Breast epithelium (tissue), 4 donors: ENCODE measurements at regions of chr12 and their contacts with region 1.

Region 1: GRCh38 chr12:72173974-72174373 is 98.2 kb upstream of the TRHDE start:
- DNase-seq: no peak
- H3K4me3 ChIP-seq: no peak overlapping the region
- H3K27ac ChIP-seq: no peak overlapping the region
- H3K4me1 ChIP-seq: no peaks in the 10 kb centered on the region
- H3K27me3 ChIP-seq: no peaks in the 10 kb centered on the region
- CTCF ChIP-seq: no peak
- POLR2A ChIP-seq: no peak

Region 2: GRCh38 chr12:72141381-72141780 is 32.6 kb before region 1 on chr12:
- intact Hi-C with region 1: no loop called
- DNase-seq: no peak
- H3K4me3 ChIP-seq: no peak overlapping the region
- H3K27ac ChIP-seq: no peak overlapping the region
- H3K4me1 ChIP-seq: no peaks in the 10 kb centered on the region
- H3K27me3 ChIP-seq: no peaks in the 10 kb centered on the region
- CTCF ChIP-seq: no peak
- POLR2A ChIP-seq: no peak

Region 3: GRCh38 chr12:74085571-74085970 is 1911.6 kb after region 1 on chr12:
- intact Hi-C with region 1: loop called (anchors 5 kb)
- DNase-seq: no peak
- H3K4me3 ChIP-seq: no peak overlapping the region
- H3K27ac ChIP-seq: no peak overlapping the region
- H3K4me1 ChIP-seq: no peaks in the 10 kb centered on the region
- H3K27me3 ChIP-seq: no peaks in the 10 kb centered on the region
- CTCF ChIP-seq: no peak
- POLR2A ChIP-seq: no peak